H1 (cell line): ENCODE measurements at regions of chr22 and their contacts with region 1.

Region 1: DNA sequence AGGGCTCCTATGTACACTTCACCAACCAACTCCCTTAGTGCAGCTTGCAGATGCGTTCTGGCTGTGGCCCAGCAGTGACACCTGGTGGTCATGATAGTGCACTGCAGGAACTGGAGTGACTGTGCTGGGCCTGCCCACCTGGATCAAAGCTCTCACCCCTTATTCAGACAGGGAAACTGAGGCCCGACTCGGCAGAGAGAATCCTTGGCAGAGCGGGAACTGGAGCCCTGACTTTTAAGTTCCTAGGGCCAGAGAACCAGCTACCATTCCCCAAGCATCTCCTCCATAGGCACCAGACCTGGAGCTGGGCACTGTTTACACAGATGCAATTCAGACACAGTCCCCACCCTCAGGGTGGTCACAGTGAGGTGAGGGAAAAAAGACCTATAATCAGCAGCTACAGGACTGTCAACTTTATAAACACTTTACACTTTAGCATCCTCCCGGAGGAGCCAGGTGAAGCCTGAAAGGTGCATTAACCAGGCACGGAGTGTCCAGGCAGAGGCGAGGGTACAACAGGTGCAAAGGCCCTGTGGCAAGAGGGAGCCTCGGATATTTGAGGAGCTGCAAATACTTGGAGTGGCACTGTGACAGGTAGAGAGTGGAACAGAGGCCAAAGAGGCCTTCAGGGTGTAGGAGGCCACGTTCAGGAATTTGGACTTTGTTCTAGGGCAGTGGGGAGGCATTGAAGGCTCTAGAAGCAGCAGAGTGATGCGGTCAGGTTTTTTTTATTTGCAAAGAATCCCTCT is 22.0 kb downstream of the RHBDD3 start:
- DNase-seq: peak in 1 of 2 experiments; percentile 89
- H3K4me3 ChIP-seq: no peak overlapping the region
- H3K27ac ChIP-seq: no peak overlapping the region
- H3K4me1 ChIP-seq: no peaks in the 10 kb centered on the region
- H3K27me3 ChIP-seq: no peaks in the 10 kb centered on the region
- CTCF ChIP-seq: peak; percentile 96 to 100 (median 98)
- EP300 ChIP-seq: no peak
- POLR2A ChIP-seq: no peak
- RAD21 ChIP-seq: peak; percentile 99

Region 2: GRCh38 chr22:28943501-28943879 is 302.3 kb before region 1 on chr22:
- CTCF ChIA-PET with region 1: no interaction called
- POLR2A ChIA-PET with region 1: no interaction called
- DNase-seq: no peak
- H3K4me3 ChIP-seq: no peak overlapping the region
- H3K27ac ChIP-seq: no peak overlapping the region
- H3K4me1 ChIP-seq: peaks cover 2 to 13% (median 10%) of the 10 kb centered on the region in 4 experiments; a peak in 6 of 7 replicates
- H3K27me3 ChIP-seq: no peaks in the 10 kb centered on the region
- CTCF ChIP-seq: no peak
- EP300 ChIP-seq: no peak
- POLR2A ChIP-seq: no peak
- RAD21 ChIP-seq: no peak

Region 3: DNA sequence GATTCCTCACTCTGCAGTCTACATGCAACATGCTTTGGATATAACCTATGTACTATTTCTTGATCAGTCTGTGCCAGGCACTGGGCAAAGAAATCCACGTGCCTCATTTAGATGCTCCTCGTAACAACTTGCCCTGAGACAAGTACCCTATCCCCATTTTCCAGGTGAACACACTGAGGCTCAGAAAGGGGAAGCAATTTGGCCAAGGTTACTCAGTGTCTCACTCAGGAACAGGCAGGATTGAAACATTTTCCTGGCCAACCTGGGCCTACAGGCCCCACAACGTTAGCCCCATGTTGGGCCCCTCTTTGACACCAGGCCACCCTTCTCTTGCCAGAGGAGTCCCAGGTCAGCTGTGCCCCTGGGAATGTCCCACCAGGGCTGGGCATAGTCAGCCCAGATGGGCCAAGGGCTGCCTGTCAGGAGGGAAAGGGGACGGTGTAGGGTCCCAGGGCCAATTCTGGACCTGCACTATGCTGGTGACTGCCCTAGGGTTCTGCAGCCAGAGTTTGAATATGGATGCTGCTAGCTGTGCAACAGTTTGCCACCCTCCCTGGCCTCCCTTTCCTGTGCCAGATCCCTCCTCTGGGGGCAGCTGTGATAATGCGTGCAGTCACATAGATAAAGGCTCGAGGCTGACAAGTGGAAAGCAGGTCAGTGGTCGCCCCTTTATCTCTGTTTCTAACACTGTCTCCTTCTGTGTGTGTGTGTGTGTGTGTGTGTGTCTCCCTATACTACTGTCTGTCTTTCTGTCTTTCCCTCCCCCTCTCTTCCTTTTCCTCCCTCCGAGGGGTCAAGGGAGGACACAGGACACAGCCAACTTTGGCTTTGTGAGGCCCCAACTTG is 50.5 kb before region 1 on chr22:
- CTCF ChIA-PET with region 1: interaction called, 12 read pairs
- POLR2A ChIA-PET with region 1: no interaction called
- DNase-seq: no peak
- H3K4me3 ChIP-seq: no peak overlapping the region
- H3K27ac ChIP-seq: no peak overlapping the region; the same call in 1 of the 2 replicates
- H3K4me1 ChIP-seq: no peaks in the 10 kb centered on the region
- H3K27me3 ChIP-seq: no peaks in the 10 kb centered on the region
- CTCF ChIP-seq: no peak
- EP300 ChIP-seq: no peak
- POLR2A ChIP-seq: no peak
- RAD21 ChIP-seq: no peak

Region 4: GRCh38 chr22:29208879-29209623 is 36.8 kb before region 1 on chr22:
- CTCF ChIA-PET with region 1: interaction called, 84 read pairs
- POLR2A ChIA-PET with region 1: interaction called, 3 read pairs
- DNase-seq: no peak
- H3K4me3 ChIP-seq: no peak overlapping the region
- H3K27ac ChIP-seq: no peak overlapping the region
- H3K4me1 ChIP-seq: peaks cover 0 to 17% (median 4%) of the 10 kb centered on the region in 4 experiments; a peak in 6 of 7 replicates
- H3K27me3 ChIP-seq: peaks cover 0 to 12% (median 3%) of the 10 kb centered on the region in 4 experiments; a peak in 5 of 7 replicates
- CTCF ChIP-seq: no peak
- EP300 ChIP-seq: no peak
- POLR2A ChIP-seq: no peak
- RAD21 ChIP-seq: no peak

Region 5: DNA sequence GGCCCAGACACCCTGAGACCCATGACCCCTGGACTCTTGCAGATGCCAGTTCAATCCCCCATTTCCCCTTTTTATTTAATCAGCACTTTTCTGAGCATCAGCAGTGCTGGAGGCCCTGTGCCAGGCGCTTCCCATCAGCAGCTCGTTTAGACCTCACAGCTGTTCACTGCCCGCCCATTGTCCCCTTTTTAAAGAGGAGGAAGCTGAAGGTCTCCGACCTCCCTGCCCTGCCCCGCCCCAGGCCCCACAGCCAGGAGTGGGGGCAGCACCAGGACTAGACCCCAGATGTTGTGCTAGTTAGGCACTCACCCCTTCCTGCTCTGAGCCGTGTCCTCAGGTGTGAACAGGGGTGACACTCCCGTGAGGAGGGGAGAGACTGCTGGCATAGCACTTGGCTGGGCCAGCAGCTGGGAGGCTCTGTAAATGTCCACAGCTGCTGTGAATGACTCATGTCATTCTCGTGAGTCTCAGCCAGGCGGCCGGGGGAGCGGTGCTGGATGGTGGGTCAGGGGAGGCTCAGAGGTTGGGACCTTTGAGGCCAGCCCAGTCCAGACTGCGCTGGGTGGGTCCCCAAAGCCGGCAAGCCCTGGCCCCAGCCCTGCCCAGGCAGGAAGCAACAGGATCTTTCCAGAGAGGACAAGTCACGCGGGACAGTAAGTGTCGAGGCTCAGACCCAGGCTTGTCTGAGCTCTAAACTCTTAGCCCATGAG is 20.2 kb before region 1 on chr22:
- CTCF ChIA-PET with region 1: interaction called, 23 read pairs
- POLR2A ChIA-PET with region 1: no interaction called
- DNase-seq: no peak
- H3K4me3 ChIP-seq: no peak overlapping the region
- H3K27ac ChIP-seq: no peak overlapping the region
- H3K4me1 ChIP-seq: peaks cover 0 to 4% (median under 1%) of the 10 kb centered on the region in 4 experiments; a peak in 4 of 7 replicates
- H3K27me3 ChIP-seq: peaks cover 0 to 5% (median 0%) of the 10 kb centered on the region in 4 experiments; a peak in 2 of 7 replicates
- CTCF ChIP-seq: no peak
- EP300 ChIP-seq: no peak
- POLR2A ChIP-seq: no peak
- RAD21 ChIP-seq: no peak

Region 6: DNA sequence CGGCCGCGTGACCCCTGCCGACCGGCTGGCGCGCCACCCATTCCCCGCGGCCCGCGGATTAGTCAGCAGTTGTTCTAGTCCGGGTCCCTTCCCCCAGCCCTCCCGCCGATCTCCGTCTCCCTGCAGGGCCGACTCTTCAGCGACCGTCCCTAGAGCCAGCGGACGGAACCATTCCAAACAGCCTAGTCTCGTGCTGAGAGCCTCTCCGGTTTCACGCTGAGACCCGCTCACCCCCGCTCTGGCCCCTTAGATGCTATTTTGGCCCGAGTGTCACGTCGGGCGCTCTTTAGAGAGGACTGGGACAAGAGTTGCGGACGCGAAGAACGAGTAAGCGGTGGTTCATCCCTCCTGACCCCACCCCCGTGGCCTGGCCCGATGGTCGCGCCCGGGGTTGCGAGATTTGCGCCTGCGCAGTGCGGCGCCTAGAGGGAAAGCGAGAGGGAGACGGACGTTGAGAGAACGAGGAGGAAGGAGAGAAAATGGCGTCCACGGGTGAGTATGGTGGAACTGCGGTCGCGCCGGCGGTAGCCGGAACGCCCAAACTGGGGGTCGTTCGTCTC is 22.1 kb after region 1 on chr22 and contains the starts of genes EWSR1 and RHBDD3:
- CTCF ChIA-PET with region 1: interaction called, 17 read pairs
- POLR2A ChIA-PET with region 1: interaction called, 6 read pairs
- DNase-seq: peak; percentile 69 to 100
- H3K4me3 ChIP-seq: peak within 1 kb of the TSS; percentile 80 to 96 (median 95)
- H3K27ac ChIP-seq: peak within 1 kb of the TSS; percentile 100
- H3K4me1 ChIP-seq: peaks cover 6 to 19% (median 11%) of the 10 kb centered on the region in 4 experiments; a peak in 6 of 7 replicates
- H3K27me3 ChIP-seq: no peaks in the 10 kb centered on the region
- CTCF ChIP-seq: no peak
- EP300 ChIP-seq: peak in 1 of 2 experiments; percentile 98; a peak in 2 of 3 replicates
- POLR2A ChIP-seq: peak; percentile 87 to 91; a peak in 2 of 3 replicates
- RAD21 ChIP-seq: no peak
- total RNA-seq, gene EWSR1: 385 and 387 TPM in 2 replicates
- total RNA-seq, gene RHBDD3: 72.1 and 75.7 TPM in 2 replicates

Region 7: GRCh38 chr22:29320546-29320945 is 74.7 kb after region 1 on chr22:
- CTCF ChIA-PET with region 1: no interaction called
- POLR2A ChIA-PET with region 1: no interaction called
- DNase-seq: no peak
- H3K4me3 ChIP-seq: no peak overlapping the region
- H3K27ac ChIP-seq: no peak overlapping the region
- H3K4me1 ChIP-seq: no peaks in the 10 kb centered on the region; a peak in 2 of 7 replicates
- H3K27me3 ChIP-seq: peaks cover 6 to 17% (median 16%) of the 10 kb centered on the region in 4 experiments
- CTCF ChIP-seq: peak in 1 of 3 experiments; percentile 5; a peak in 1 of 4 replicates
- EP300 ChIP-seq: no peak
- POLR2A ChIP-seq: no peak
- RAD21 ChIP-seq: no peak

Region 8: DNA sequence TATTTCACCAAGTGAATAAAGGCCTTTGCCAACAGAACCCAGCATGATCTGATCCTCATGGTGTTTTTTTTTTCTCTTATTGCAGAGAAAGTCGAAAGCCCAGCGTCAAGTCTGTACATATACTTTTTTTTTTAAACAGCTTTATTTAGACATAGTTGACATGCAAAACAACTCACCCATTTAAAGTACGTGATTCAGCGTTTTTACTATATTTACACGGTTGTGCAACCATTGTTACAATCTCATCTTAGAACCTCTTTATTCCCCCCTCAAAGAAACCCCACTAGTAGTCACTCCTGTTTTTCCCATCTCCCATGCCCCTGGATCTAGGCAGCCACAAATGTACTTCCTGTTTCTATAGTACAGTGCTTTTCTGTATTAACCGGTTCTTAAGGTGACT is 163.1 kb after region 1 on chr22:
- CTCF ChIA-PET with region 1: no interaction called
- POLR2A ChIA-PET with region 1: no interaction called
- DNase-seq: no peak
- H3K4me3 ChIP-seq: no peak overlapping the region
- H3K27ac ChIP-seq: no peak overlapping the region
- H3K4me1 ChIP-seq: no peaks in the 10 kb centered on the region
- H3K27me3 ChIP-seq: no peaks in the 10 kb centered on the region
- CTCF ChIP-seq: no peak
- EP300 ChIP-seq: no peak
- POLR2A ChIP-seq: no peak
- RAD21 ChIP-seq: no peak